ENCODE measurements at regions of chr20 and their contacts with region 1.

Region 1: DNA sequence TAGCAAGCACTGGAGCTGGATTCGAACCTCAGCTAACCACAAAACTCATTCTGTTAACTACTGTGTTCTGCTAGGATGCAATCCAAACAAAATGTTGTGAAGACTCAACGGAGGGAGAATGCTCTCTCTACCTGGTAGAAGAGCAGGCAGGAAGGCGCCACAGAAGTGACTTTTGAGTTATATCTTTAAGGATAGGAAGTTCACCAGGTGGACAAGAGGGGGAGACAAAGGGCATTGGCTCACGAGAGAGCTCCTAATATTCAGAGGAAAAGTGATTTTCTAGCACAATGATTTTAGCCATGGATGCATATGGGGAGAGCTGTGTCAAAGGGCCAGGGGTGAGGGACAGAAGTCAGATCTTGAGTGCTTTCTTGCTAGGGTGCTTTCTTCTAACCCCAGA is 108.4 kb upstream of the MAFB start:
- DNase-seq: no peak
- H3K4me3 ChIP-seq: no peak overlapping the region
- H3K27me3 ChIP-seq: peaks cover 1% of the 10 kb centered on the region; the same call in 1 of the 2 replicates
- CTCF ChIP-seq: peak; percentile 71

Region 2: DNA sequence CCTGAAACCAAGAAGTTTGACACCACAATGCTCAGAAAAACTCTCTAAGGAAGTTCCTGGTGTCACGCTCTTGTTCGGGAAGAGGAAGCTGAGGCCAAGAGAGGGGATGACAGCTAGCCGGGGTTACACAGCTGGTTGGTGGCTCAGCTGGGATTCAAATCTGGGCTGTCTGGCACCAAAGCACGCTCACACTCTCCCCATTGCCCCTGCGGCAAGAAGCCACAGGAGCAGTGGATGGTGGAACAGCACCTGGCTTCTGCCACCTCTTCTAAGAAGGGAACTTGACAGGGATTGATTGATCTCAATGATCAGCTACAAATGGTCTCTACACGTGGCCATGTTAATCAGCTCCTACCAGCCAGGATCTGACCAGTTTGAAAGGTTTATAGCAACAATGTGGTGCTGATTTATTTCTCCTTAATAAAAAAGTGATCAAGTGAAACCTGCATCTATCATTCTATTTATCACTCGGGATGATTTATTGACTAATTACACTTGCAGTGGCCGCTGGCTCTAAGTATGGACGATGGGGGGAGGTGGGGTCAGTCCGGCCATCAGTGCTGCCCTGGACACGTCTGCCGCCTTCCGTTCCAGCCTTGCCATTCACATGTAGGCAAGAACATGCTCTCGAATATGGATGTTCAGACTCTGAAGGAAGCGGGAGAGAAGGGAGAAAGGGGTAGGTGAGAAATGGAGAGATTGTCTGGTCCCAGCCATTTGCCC is 159.3 kb after region 1 on chr20:
- CTCF ChIA-PET with region 1: interaction called, 81 read pairs
- POLR2A ChIA-PET with region 1: no interaction called
- DNase-seq: no peak
- H3K4me3 ChIP-seq: no peak overlapping the region
- H3K27me3 ChIP-seq: no peaks in the 10 kb centered on the region
- CTCF ChIP-seq: no peak

Region 3: GRCh38 chr20:40962730-40963504 is 165.5 kb after region 1 on chr20:
- CTCF ChIA-PET with region 1: interaction called, 81 read pairs
- POLR2A ChIA-PET with region 1: no interaction called
- DNase-seq: no peak
- H3K4me3 ChIP-seq: no peak overlapping the region
- H3K27me3 ChIP-seq: no peaks in the 10 kb centered on the region; the same call in 1 of the 2 replicates
- CTCF ChIP-seq: peak; percentile 84